B cell (primary cell): ENCODE measurements at regions of chr1 and their contacts with region 1.

Region 1: GRCh38 chr1:85307987-85308832 is 31.8 kb upstream of the BCL10 start:
- DNase-seq: peak; percentile 80
- ATAC-seq: peak; percentile 96
- H3K4me3 ChIP-seq: peak overlapping the region in 2 of 5 experiments; percentile 28 to 38
- H3K4me3 Mint-ChIP-seq: peak overlapping the region; percentile 84
- H3K27ac ChIP-seq: no peak overlapping the region
- H3K27ac Mint-ChIP-seq: no peak overlapping the region
- H3K4me1 ChIP-seq: peaks cover 8 to 10% of the 10 kb centered on the region in 2 donors
- H3K4me1 Mint-ChIP-seq: peaks cover 9% of the 10 kb centered on the region
- H3K27me3 ChIP-seq: peaks cover 0 to 11% (median 6%) of the 10 kb centered on the region in 4 experiments
- H3K27me3 Mint-ChIP-seq: peaks cover 15% of the 10 kb centered on the region
- CTCF ChIP-seq: peak; percentile 90

Region 2: DNA sequence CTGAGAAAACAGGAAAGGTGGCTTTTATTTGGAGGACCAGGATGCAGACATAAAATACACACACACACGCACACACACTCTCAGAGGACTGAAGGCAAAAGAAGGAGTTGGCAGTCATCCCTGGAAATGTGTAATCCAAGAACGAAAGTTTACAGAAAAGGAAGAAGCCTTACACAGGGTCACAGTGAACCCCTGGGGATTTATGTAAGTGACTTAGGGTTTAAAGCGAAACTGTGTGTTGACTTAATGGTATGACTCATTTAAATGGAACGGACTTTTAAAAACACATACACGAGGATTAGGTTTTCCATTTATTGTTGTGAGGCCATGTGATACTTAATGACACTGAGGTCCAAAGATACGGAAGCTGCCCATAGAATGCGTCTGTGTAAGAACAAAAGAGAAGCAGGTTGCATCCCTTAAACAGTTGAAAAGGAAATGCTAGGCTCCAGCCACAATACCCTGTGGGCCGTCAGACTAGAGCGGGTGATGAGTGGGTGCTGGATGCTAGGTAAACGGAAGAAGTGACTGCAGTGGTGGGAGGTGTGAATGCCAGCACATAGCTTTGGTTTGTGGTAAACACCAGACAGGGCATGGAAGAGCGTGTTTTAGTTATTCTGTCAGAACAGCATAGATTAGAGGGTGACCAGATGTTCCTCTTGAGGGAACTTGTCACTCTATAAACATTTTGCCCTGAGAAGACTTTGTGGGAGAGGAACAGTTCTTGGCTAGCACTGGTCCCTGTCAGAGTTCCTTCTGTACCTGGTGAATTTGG is 10.2 kb before region 1 on chr1:
- CTCF ChIA-PET with region 1: interaction called, 19 read pairs
- POLR2A ChIA-PET with region 1: no interaction called
- intact Hi-C with region 1: no loop called
- DNase-seq: peak; percentile 66
- ATAC-seq: peak; percentile 90
- H3K4me3 ChIP-seq: peak overlapping the region in 3 of 5 experiments; percentile 6 to 51 (median 17)
- H3K4me3 Mint-ChIP-seq: peak overlapping the region; percentile 76
- H3K27ac ChIP-seq: peak overlapping the region; percentile 50 to 60
- H3K27ac Mint-ChIP-seq: peak overlapping the region; percentile 78
- H3K4me1 ChIP-seq: peaks cover 19 to 20% of the 10 kb centered on the region in 2 donors
- H3K4me1 Mint-ChIP-seq: peaks cover 26% of the 10 kb centered on the region
- H3K27me3 ChIP-seq: no peaks in the 10 kb centered on the region
- H3K27me3 Mint-ChIP-seq: no peaks in the 10 kb centered on the region
- CTCF ChIP-seq: no peak

Region 3: GRCh38 chr1:85502625-85503083 is 194.4 kb after region 1 on chr1:
- CTCF ChIA-PET with region 1: no interaction called
- POLR2A ChIA-PET with region 1: no interaction called
- intact Hi-C with region 1: loop called (anchors 2 kb)
- DNase-seq: no peak
- ATAC-seq: no peak
- H3K4me3 ChIP-seq: no peak overlapping the region
- H3K4me3 Mint-ChIP-seq: no peak overlapping the region
- H3K27ac ChIP-seq: no peak overlapping the region
- H3K27ac Mint-ChIP-seq: no peak overlapping the region
- H3K4me1 ChIP-seq: no peaks in the 10 kb centered on the region
- H3K4me1 Mint-ChIP-seq: no peaks in the 10 kb centered on the region
- H3K27me3 ChIP-seq: no peaks in the 10 kb centered on the region
- H3K27me3 Mint-ChIP-seq: peaks cover 40% of the 10 kb centered on the region
- CTCF ChIP-seq: no peak

Region 4: DNA sequence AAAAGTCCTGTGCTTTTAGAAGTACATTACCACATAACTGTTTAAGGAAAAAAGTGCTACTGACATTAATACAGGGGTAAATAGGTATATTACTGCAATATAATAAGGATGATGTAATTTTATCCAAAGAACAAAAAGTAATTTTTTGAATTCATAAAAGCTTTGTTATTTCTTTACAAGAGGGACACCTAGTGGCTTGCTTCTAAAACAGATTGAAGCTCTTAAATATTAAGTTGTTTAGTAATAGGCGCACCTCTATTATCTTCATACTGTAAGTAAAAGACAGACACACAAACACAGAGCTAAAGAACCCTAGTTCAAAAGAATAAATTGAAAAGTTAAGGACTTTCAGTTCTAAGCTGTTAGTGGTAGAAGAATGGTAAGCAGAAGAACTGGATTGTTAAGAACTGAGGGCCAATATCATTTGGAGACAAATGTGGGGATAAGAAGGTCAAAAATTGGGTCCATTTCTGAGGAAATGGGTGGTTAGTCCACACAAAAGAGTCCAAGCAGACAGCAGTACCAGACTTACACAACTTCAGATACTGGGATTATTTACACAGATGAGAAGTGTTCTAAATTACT is 384.6 kb after region 1 on chr1:
- CTCF ChIA-PET with region 1: interaction called, 19 read pairs
- POLR2A ChIA-PET with region 1: no interaction called
- intact Hi-C with region 1: loop called (anchors 1 kb)
- DNase-seq: no peak
- ATAC-seq: no peak
- H3K4me3 ChIP-seq: no peak overlapping the region
- H3K4me3 Mint-ChIP-seq: no peak overlapping the region
- H3K27ac ChIP-seq: no peak overlapping the region
- H3K27ac Mint-ChIP-seq: no peak overlapping the region
- H3K4me1 ChIP-seq: no peaks in the 10 kb centered on the region
- H3K4me1 Mint-ChIP-seq: peaks cover 2% of the 10 kb centered on the region
- H3K27me3 ChIP-seq: no peaks in the 10 kb centered on the region
- H3K27me3 Mint-ChIP-seq: no peaks in the 10 kb centered on the region
- CTCF ChIP-seq: peak; percentile 25

Region 5: GRCh38 chr1:86018283-86018923 is 710.2 kb after region 1 on chr1:
- CTCF ChIA-PET with region 1: interaction called, 49 read pairs
- POLR2A ChIA-PET with region 1: no interaction called
- intact Hi-C with region 1: no loop called
- DNase-seq: peak; percentile 42
- ATAC-seq: peak; percentile 36
- H3K4me3 ChIP-seq: no peak overlapping the region
- H3K4me3 Mint-ChIP-seq: no peak overlapping the region
- H3K27ac ChIP-seq: no peak overlapping the region
- H3K27ac Mint-ChIP-seq: no peak overlapping the region
- H3K4me1 ChIP-seq: no peaks in the 10 kb centered on the region
- H3K4me1 Mint-ChIP-seq: no peaks in the 10 kb centered on the region
- H3K27me3 ChIP-seq: no peaks in the 10 kb centered on the region
- H3K27me3 Mint-ChIP-seq: no peaks in the 10 kb centered on the region
- CTCF ChIP-seq: peak; percentile 86